Gastrocnemius medialis (tissue), 4 donors: ENCODE measurements at regions of chr18 and their contacts with region 1.

Region 1: GRCh38 chr18:59996370-59996966 is 96.7 kb downstream of the PMAIP1 start:
- DNase-seq: no peak
- ATAC-seq: no peak
- H3K4me3 ChIP-seq: no peak overlapping the region
- H3K27ac ChIP-seq: no peak overlapping the region
- H3K4me1 ChIP-seq: no peaks in the 10 kb centered on the region
- H3K27me3 ChIP-seq: no peaks in the 10 kb centered on the region
- CTCF ChIP-seq: peak in 2 of 5 experiments; percentile 12 to 25
- POLR2A ChIP-seq: no peak

Region 2: DNA sequence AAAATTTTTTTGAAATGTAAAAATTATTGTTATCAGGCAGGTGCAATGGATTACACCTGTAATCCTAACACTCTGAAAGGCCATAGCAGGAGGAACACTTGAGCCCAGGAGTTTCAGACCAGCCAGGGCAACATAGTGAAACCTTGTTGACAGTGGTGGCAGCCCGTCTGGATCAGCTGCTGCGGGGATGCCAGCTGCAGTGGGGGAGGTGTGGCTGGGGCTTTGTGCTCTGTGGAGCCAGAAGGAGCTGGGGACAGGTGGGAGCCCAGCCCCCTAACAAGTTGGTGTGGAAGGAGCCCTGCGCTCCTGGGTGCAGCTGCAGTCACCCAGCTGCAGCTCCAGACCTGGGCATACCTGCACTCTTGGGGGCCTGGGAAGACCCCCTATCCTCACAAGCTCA is 558.5 kb after region 1 on chr18:
- in situ Hi-C with region 1: loop called in 2 of 4 experiments (anchors 10 to 25 kb)
- intact Hi-C with region 1: no loop called
- DNase-seq: no peak
- ATAC-seq: no peak
- H3K4me3 ChIP-seq: no peak overlapping the region
- H3K27ac ChIP-seq: no peak overlapping the region
- H3K4me1 ChIP-seq: no peaks in the 10 kb centered on the region
- H3K27me3 ChIP-seq: no peaks in the 10 kb centered on the region
- CTCF ChIP-seq: no peak
- POLR2A ChIP-seq: no peak